ENCODE measurements at regions of chr4 and their contacts with region 1.

Region 1: DNA sequence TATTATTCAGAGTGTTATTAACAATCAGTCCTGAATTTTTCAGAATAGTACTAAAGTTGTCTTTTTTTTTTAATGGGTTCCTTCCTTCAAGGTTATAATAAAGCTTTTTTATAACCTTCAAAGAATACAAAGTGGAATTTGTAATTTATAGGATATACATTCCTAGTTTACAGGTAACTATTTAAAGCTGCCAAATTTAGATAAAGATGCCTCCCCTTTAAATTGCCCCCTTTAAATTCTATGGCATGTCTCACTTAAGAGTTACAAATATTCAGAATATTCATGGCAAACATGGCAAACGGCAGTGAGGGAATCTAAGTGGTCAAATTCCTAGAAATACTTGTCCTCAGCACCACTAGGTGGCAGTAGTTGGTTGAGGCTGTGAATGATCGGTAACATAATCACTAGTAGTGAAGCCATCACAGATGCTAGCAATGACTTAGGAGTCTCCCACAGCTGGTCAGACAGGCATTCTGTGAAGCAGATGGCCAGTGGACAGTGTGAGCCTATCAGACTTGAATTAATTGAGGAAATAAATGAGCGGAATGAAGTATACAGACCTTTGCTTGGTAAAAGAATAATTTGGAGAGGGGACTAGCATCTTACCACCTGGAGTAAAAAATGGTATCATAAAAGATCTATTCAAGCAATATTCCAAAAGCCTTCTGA is 86.4 kb downstream of the CBR4 start:
- DNase-seq: peak; percentile 30 to 39
- H3K4me3 ChIP-seq: no peak overlapping the region
- H3K27ac ChIP-seq: no peak overlapping the region
- H3K4me1 ChIP-seq: no peaks in the 10 kb centered on the region
- H3K27me3 ChIP-seq: no peaks in the 10 kb centered on the region
- CTCF ChIP-seq: peak; percentile 73

Region 2: GRCh38 chr4:168514249-168514852 is 409.3 kb before region 1 on chr4:
- CTCF ChIA-PET with region 1: no interaction called
- POLR2A ChIA-PET with region 1: no interaction called
- intact Hi-C with region 1: loop called (anchors 5 kb)
- DNase-seq: peak in 1 of 2 experiments; percentile 43
- H3K4me3 ChIP-seq: no peak overlapping the region
- H3K27ac ChIP-seq: no peak overlapping the region
- H3K4me1 ChIP-seq: no peaks in the 10 kb centered on the region
- H3K27me3 ChIP-seq: no peaks in the 10 kb centered on the region
- CTCF ChIP-seq: peak; percentile 67

Region 3: GRCh38 chr4:169252339-169253112 is 328.9 kb after region 1 on chr4:
- CTCF ChIA-PET with region 1: no interaction called
- POLR2A ChIA-PET with region 1: interaction called, 14 read pairs
- intact Hi-C with region 1: no loop called
- DNase-seq: no peak
- H3K4me3 ChIP-seq: no peak overlapping the region
- H3K27ac ChIP-seq: peak overlapping the region; percentile 81
- H3K4me1 ChIP-seq: peaks cover 54% of the 10 kb centered on the region
- H3K27me3 ChIP-seq: no peaks in the 10 kb centered on the region
- CTCF ChIP-seq: no peak

Region 4: GRCh38 chr4:169566021-169566818 is 642.6 kb after region 1 on chr4:
- CTCF ChIA-PET with region 1: interaction called, 5 read pairs
- POLR2A ChIA-PET with region 1: no interaction called
- intact Hi-C with region 1: loop called (anchors 1 kb)
- DNase-seq: peak in 1 of 2 experiments; percentile 18
- H3K4me3 ChIP-seq: no peak overlapping the region
- H3K27ac ChIP-seq: no peak overlapping the region
- H3K4me1 ChIP-seq: no peaks in the 10 kb centered on the region
- H3K27me3 ChIP-seq: no peaks in the 10 kb centered on the region
- CTCF ChIP-seq: peak; percentile 65

Measured in PC-9 (cell line).